Transverse colon (tissue), 4 donors: ENCODE measurements at regions of chr1 and their contacts with region 1.

Region 1: GRCh38 chr1:115609021-115609420 is 32.7 kb upstream of the VANGL1 start:
- DNase-seq: no peak
- H3K4me3 ChIP-seq: no peak overlapping the region
- H3K27ac ChIP-seq: no peak overlapping the region
- H3K4me1 ChIP-seq: no peaks in the 10 kb centered on the region
- H3K27me3 ChIP-seq: no peaks in the 10 kb centered on the region
- CTCF ChIP-seq: no peak
- EP300 ChIP-seq: no peak
- POLR2A ChIP-seq: no peak

Region 2: DNA sequence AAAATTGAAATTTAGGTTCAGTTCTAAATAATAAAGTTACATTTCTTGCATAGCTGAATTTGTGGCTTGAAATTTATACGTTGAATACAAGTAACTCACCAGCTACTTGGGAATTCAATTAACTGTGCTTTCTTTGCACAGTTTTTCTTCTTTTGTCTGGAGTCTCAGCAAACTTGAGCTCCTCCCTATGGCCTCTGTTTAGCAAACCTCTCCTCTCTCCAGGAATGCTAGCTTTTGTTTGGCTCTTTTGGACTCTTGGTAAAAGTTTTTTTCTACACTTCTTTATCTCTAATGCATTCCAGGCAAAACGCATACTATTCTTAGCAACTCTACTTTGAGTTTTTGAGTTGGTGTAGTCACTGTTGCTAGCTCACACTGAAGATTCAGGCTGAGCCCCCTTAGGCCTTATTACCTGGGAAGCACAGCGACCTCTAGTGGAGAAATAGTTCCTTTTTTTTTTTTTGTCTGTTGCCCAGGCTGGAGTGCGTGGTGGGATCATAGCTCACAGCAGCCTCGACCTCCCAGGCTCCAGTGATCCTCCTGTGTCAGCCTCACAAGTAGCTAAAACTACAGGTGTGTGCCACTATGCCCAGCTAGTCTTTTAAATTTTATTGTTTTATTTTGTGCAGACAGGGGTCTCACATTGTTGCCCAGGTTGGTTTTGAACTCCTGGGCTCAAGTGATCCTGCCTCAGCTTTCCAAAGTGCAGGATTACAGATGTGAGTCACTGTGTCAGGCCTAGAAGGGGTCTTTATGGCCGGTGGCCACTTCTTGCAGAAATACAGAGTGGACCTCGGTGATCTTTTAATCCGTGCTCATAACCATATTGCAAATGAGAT is 97.8 kb after region 1 on chr1:
- in situ Hi-C with region 1: loop called in 3 of 4 experiments (anchors 5 to 10 kb)
- intact Hi-C with region 1: loop called (anchors 5 kb)
- DNase-seq: no peak
- H3K4me3 ChIP-seq: no peak overlapping the region
- H3K27ac ChIP-seq: no peak overlapping the region
- H3K4me1 ChIP-seq: no peaks in the 10 kb centered on the region
- H3K27me3 ChIP-seq: no peaks in the 10 kb centered on the region
- CTCF ChIP-seq: peak; percentile 59 to 71 (median 68)
- EP300 ChIP-seq: no peak
- POLR2A ChIP-seq: no peak

Region 3: DNA sequence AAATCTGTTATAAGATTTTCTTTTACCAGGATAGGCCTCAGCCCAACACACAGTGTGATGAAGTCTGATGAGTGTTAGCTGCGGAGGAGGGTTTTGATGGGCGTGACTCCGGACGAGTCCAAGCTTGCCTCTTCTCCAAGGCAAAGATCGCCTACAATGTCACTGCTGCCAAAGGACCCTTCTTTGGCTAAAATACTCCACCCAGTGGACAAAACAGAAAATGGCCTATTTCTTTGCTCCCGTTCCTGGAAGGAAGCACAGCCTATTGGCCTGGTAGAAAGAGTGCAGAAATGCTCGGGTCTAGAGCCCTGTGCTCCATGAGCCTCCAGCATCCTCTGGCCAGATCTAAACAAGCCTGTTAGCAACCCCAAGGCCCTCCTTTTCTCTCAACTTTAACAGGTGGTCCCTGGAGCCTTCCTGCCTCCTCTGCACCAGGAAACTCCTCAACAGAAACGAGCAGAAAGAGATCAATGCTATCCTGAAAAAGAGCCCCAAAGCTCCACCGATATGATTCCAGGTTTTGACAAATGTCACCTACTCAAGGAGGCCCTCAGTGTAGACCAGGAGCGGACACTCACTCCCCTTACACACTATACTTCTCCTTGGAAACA is 162.9 kb after region 1 on chr1:
- in situ Hi-C with region 1: loop called in 2 of 4 experiments (anchors 5 to 10 kb)
- intact Hi-C with region 1: loop called (anchors 10 kb)
- DNase-seq: peak; percentile 39
- H3K4me3 ChIP-seq: peak overlapping the region in 1 of 4 donors; percentile 29
- H3K27ac ChIP-seq: peak overlapping the region in 2 of 4 donors; percentile 22 to 30
- H3K4me1 ChIP-seq: peaks cover 0 to 6% (median 0%) of the 10 kb centered on the region in 4 donors
- H3K27me3 ChIP-seq: no peaks in the 10 kb centered on the region
- CTCF ChIP-seq: peak; percentile 57 to 75 (median 72)
- EP300 ChIP-seq: no peak
- POLR2A ChIP-seq: no peak